Caco-2 (cell line): ENCODE measurements at regions of chr4 and their contacts with region 1.

Region 1: DNA sequence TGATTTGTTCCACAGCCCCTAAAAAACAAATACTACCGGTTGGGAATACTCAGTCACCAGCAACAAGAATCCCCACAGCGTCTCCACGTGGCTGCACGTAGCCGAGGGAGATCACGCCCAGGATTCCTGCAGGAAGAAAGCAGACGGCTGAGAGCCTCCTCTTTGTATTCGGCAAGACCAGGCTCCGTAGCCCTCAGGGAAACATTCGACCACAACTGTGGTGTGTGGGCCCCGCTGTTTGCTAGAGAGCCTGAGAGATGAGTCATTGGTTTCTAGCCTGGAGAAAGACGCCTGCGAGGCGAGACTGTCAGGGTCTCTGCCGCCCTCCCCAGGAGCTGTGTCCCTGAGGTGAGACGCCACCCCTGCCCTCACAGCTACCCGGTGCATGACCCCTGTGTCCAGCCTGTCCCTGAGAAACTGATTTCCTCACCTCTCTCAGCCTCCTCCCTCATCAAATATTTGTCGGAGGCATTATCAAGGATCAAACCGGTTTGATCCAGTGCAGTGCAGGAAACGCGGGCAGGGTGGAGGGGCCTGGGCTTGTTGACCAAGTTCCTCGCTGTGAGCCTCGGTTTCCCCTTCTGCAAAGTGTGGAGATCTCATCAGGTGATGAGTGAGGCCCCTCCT is 4.7 kb upstream of the S100P start:
- DNase-seq: peak; percentile 84 to 90
- H3K4me3 ChIP-seq: no peak overlapping the region; the same call in 1 of the 2 replicates
- H3K4me3 Mint-ChIP-seq: peak overlapping the region; percentile 64
- H3K27ac Mint-ChIP-seq: peak overlapping the region; percentile 94
- H3K4me1 ChIP-seq: peaks cover 47% of the 10 kb centered on the region
- H3K4me1 Mint-ChIP-seq: peaks cover 50% of the 10 kb centered on the region
- H3K27me3 ChIP-seq: no peaks in the 10 kb centered on the region
- H3K27me3 Mint-ChIP-seq: no peaks in the 10 kb centered on the region
- CTCF ChIP-seq: peak in 1 of 2 experiments; percentile 14

Region 2: DNA sequence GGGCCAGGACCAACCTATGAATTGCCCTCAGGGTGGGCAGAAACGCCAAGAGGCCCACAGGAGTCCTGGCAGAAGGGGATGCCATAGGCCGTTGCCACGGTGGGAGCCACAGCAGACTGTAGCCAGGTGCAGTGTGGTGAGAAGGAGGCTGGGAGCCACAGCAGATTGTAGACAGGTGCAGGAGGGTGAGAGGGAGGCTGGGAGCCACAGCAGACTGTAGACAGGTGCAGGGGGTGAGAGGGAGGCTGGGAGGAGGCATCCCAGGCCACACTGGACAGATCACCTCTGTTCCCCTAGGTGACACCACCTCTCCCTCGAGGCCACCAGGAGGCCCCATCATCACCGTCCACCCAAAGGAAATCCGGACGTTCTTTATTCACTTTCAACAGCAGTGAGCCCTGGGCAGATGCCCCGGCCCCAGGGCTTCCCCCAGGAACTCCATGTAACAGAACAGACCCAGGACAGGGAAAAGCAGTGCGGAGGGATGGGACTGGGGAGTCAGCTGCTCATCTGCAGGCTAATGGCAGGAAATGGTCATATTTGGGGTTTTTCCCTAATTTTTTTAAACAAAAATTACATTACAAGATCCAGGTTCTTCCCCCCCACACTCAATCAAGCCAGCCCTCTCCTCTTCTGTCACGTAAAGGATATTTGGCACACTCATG is 68.0 kb before region 1 on chr4:
- CTCF ChIA-PET with region 1: no interaction called
- POLR2A ChIA-PET with region 1: no interaction called
- intact Hi-C with region 1: loop called (anchors 10 kb)
- DNase-seq: no peak
- H3K4me3 ChIP-seq: no peak overlapping the region
- H3K4me3 Mint-ChIP-seq: no peak overlapping the region
- H3K27ac Mint-ChIP-seq: no peak overlapping the region
- H3K4me1 ChIP-seq: no peaks in the 10 kb centered on the region; the same call in 1 of the 2 replicates
- H3K4me1 Mint-ChIP-seq: no peaks in the 10 kb centered on the region
- H3K27me3 ChIP-seq: no peaks in the 10 kb centered on the region
- H3K27me3 Mint-ChIP-seq: no peaks in the 10 kb centered on the region
- CTCF ChIP-seq: no peak

Region 3: GRCh38 chr4:6640292-6641163 is 48.5 kb before region 1 on chr4 and contains the start of gene MRFAP1:
- CTCF ChIA-PET with region 1: no interaction called
- POLR2A ChIA-PET with region 1: no interaction called
- intact Hi-C with region 1: loop called (anchors 2 kb)
- DNase-seq: peak; percentile 92 to 94
- H3K4me3 ChIP-seq: peak within 1 kb of the TSS; percentile 79
- H3K4me3 Mint-ChIP-seq: peak within 1 kb of the TSS; percentile 99
- H3K27ac Mint-ChIP-seq: peak within 1 kb of the TSS; percentile 99
- H3K4me1 ChIP-seq: peaks cover 4% of the 10 kb centered on the region; the same call in 1 of the 2 replicates
- H3K4me1 Mint-ChIP-seq: peaks cover 12% of the 10 kb centered on the region
- H3K27me3 ChIP-seq: no peaks in the 10 kb centered on the region
- H3K27me3 Mint-ChIP-seq: no peaks in the 10 kb centered on the region
- CTCF ChIP-seq: no peak
- total RNA-seq, gene MRFAP1: 245 and 254 TPM in 2 replicates

Region 4: DNA sequence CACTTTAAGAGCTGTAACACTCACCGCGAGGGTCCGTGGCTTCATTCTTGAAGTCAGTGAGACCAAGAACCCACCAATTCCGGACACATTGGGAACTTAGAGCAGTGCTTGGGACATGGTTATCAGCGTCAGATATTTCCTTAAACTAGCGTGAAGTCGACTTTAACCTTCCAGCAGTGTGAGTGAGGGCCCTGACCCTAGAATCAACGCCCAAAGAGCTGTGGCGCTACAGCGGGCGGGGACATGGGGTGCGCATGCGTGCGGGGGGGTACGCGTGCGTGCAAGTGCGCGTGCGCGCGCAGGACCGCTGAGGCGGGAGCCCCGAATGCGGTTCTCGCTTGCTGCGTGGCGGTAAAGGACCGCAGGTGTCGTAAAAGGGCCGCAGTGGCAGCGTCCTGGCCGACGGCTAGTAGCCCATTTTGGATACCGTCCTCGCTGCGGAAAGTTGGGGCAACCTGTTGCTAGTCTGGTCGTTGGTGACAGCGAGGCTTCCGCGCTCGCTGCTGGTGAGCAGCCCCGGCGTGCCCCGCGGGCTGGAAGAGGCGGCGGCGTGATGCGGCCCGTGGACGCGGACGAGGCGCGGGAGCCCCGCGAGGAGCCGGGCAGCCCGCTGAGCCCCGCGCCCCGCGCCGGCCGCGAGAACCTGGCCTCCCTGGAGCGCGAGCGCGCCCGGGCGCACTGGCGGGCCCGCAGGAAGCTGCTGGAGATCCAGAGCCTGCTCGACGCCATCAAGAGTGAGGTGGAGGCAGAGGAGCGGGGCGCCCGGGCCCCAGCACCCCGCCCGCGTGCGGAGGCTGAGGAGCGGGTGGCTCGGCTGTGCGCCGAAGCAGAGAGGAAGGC is 15.1 kb before region 1 on chr4:
- CTCF ChIA-PET with region 1: interaction called, 60 read pairs
- POLR2A ChIA-PET with region 1: interaction called, 14 read pairs
- intact Hi-C with region 1: loop called (anchors 1 kb)
- DNase-seq: peak; percentile 94 to 95
- H3K4me3 ChIP-seq: peak overlapping the region; percentile 89
- H3K4me3 Mint-ChIP-seq: peak overlapping the region; percentile 84
- H3K27ac Mint-ChIP-seq: peak overlapping the region; percentile 93
- H3K4me1 ChIP-seq: peaks cover 16% of the 10 kb centered on the region
- H3K4me1 Mint-ChIP-seq: peaks cover 18% of the 10 kb centered on the region
- H3K27me3 ChIP-seq: no peaks in the 10 kb centered on the region
- H3K27me3 Mint-ChIP-seq: no peaks in the 10 kb centered on the region
- CTCF ChIP-seq: no peak